ENCODE measurements at regions of chr7 and their contacts with region 1.

Region 1: DNA sequence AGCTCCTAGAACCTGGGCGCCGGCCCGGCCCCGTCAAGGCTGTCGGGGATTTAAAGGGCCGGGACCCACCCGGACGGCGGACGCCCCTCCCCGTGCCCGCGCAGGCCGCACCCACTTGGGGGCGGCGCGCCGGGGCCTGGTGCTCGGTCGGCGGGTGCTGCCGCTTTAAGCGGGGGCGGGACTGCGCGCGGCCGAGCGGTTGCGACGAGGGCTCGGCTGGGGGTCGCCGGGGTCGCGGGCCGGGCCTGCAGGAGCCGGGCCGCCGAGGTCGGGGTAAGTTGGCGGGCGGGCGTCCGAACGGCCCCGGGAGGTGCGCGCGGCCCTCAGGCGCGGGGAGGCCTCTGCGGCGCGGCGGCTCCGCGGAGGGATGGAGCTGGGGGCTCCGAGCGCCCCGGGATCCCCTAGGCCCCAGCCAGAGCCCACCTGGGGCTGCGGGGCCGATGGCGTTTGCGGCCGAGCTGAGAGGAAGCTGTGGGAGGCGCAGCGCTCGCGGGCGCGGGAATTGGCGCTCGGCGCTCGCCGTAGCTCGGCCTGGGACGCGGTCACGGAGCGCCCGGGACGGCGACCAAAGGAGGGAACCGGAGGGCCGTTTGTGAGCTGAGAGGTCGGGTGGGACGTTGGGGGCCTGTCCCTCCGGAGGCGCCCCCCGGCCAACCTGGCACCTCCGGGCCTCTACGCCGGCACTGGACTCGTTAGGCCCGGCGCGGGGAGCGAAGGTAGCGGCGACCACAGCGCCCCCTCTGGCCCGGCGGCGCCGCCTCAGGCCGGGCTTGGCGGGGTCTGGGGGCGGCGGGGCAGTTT is at the start of gene TRRAP:
- DNase-seq: peak; percentile 83
- H3K4me3 Mint-ChIP-seq: peak within 1 kb of the TSS; percentile 93
- H3K27ac Mint-ChIP-seq: peak within 1 kb of the TSS; percentile 96
- H3K4me1 Mint-ChIP-seq: peaks cover 34% of the 10 kb centered on the region
- H3K27me3 Mint-ChIP-seq: no peaks in the 10 kb centered on the region
- total RNA-seq, gene TRRAP: 44.3 to 48.7 TPM

Region 2: DNA sequence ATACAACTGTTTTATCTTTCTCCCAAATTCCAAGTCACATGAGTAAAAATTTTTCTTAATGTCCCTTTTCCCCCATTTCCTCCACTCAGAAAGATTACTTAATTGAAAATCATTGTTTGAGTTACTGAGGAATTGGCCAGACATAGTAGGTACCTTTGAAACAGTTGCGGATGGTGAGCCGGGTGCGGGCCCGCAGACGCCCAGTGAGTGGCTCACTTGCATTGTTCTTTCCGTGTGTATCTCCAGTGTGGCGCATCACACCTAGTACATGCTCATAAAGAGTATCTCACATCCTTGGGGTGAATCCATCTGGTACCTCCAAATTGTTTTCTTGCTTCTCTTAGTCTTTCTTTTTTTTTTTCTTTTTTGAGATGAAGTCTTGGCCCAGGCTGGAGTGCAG is 14.0 kb after region 1 on chr7:
- CTCF ChIA-PET with region 1: interaction called, 14 read pairs
- POLR2A ChIA-PET with region 1: interaction called, 3 read pairs
- intact Hi-C with region 1: no loop called
- DNase-seq: no peak
- H3K4me3 Mint-ChIP-seq: no peak overlapping the region
- H3K27ac Mint-ChIP-seq: no peak overlapping the region
- H3K4me1 Mint-ChIP-seq: peaks cover 6% of the 10 kb centered on the region
- H3K27me3 Mint-ChIP-seq: no peaks in the 10 kb centered on the region

Region 3: DNA sequence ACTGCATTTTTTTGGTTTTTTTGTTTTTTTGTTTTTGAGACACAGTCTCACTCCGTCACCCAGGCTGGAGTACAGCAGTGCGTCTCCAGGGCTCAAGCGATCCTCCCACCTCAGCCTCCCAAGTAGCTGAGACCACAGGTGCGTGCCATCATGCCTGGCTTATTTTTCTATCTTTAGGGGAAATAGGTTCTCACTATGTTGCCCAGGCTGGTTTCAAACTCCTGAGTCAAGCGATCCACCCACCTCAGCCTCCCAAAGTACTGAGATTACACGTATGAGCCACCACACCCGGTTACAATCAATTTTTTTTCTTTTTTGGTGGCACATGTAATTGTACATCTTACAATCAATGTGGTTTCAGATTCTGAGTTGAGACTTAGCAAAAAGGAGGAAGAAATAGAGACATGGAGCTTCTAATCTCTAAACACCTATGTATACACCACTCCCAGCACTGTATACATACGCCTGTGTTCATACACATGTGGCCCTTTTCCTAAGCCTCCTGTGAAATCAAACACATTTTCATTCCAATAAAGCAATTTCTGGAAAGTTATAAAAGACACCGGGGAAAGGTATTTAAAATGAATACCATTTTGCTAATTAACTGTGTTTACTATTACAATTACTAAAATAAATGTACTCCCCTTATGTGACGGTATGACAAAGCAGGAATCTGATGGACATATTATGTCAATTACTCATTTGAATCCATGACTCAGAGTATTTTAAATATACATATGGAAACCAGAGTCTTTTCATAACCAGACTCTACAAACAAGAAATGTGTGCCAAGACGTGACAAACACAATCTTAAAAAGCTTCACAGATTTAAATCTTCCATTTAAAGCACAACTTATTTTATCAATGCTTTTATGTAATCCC is 224.5 kb after region 1 on chr7:
- CTCF ChIA-PET with region 1: no interaction called
- POLR2A ChIA-PET with region 1: no interaction called
- intact Hi-C with region 1: loop called (anchors 2 kb)
- DNase-seq: peak; percentile 76
- H3K4me3 Mint-ChIP-seq: peak overlapping the region; percentile 10
- H3K27ac Mint-ChIP-seq: peak overlapping the region; percentile 73
- H3K4me1 Mint-ChIP-seq: peaks cover 69% of the 10 kb centered on the region
- H3K27me3 Mint-ChIP-seq: no peaks in the 10 kb centered on the region

Region 4: GRCh38 chr7:99331002-99331401 is 452.4 kb after region 1 on chr7:
- CTCF ChIA-PET with region 1: no interaction called
- POLR2A ChIA-PET with region 1: interaction called, 8 read pairs
- intact Hi-C with region 1: loop called (anchors 2 kb)
- DNase-seq: peak; percentile 61
- H3K4me3 Mint-ChIP-seq: peak overlapping the region; percentile 20
- H3K27ac Mint-ChIP-seq: peak overlapping the region; percentile 89
- H3K4me1 Mint-ChIP-seq: peaks cover 60% of the 10 kb centered on the region
- H3K27me3 Mint-ChIP-seq: no peaks in the 10 kb centered on the region

Measured in activated CD4-positive, alpha-beta memory T cell treated with anti-CD3 and anti-CD28 coated beads for 36 hours (primary cell).